Posterior vena cava (tissue), 2 donors: ENCODE measurements at regions of chr2 and their contacts with region 1.

Region 1: DNA sequence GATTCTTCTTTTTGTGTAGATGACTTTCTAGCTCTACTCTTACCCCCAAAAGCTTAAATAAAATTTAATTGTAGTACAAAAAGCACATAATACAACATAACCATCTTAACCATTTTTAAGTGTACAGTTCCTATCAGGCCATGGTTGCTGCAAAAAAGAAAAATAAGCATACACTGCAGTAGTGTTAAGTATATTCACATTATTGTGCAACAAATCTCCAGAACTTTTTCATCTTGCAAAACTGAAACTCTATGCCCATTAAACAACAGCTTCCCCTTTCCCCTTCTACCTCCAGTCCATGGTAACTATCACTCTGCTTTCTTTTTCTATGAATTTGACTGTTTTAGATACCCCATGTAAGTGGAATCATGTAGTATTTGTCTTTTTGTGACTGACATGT is 18.1 kb downstream of the PPM1B start:
- DNase-seq: no peak

Region 2: GRCh38 chr2:43995733-43996533 is 190.9 kb before region 1 on chr2 and contains the start of gene LRPPRC:
- intact Hi-C with region 1: no loop called
- DNase-seq: peak; percentile 97
- total RNA-seq, gene LRPPRC: 45.9 to 53.1 TPM

Region 3: GRCh38 chr2:44155666-44156446 is 31.0 kb before region 1 on chr2:
- intact Hi-C with region 1: loop called in 1 of 2 experiments (anchors 1 kb)
- DNase-seq: no peak

Region 4: DNA sequence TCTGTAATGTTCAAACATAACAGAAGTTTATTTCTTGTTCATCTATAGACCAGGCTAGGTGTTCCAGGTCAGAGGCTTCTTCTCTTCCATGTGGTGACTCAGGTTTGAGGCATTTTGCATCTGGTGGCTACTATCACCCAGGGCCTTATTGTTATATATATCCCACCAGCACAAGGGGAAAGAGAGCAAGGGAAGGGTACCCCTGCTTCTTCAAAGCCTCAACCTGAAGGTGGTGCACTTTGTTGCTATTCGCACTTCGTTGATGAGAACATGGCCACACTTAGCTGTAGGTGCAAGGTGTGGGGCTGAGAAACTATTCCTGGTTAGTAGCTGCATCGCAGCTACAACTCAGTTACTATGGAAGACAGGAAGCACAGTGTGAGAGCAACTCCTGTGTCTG is 61.1 kb after region 1 on chr2:
- intact Hi-C with region 1: no loop called
- DNase-seq: no peak